H1 (cell line): ENCODE measurements at regions of chr14 and their contacts with region 1.

Region 1: GRCh38 chr14:99729991-99730868 is 46.1 kb downstream of the CYP46A1 start:
- DNase-seq: peak in 1 of 2 experiments; percentile 100
- H3K4me3 ChIP-seq: peak overlapping the region; percentile 33 to 70 (median 48)
- H3K27ac ChIP-seq: no peak overlapping the region
- H3K4me1 ChIP-seq: peaks cover 0 to 9% (median 7%) of the 10 kb centered on the region in 4 experiments; a peak in 5 of 7 replicates
- H3K27me3 ChIP-seq: 0 out of 7 replicates have a peak, but pooled peaks cover 0 to 3% (median 0%) of the 10 kb centered on the region in 4 experiments
- CTCF ChIP-seq: peak in 2 of 3 experiments; percentile 96; a peak in 3 of 4 replicates
- EP300 ChIP-seq: no peak; a peak in 1 of 3 replicates
- POLR2A ChIP-seq: no peak
- RAD21 ChIP-seq: peak; percentile 76 to 90

Region 2: DNA sequence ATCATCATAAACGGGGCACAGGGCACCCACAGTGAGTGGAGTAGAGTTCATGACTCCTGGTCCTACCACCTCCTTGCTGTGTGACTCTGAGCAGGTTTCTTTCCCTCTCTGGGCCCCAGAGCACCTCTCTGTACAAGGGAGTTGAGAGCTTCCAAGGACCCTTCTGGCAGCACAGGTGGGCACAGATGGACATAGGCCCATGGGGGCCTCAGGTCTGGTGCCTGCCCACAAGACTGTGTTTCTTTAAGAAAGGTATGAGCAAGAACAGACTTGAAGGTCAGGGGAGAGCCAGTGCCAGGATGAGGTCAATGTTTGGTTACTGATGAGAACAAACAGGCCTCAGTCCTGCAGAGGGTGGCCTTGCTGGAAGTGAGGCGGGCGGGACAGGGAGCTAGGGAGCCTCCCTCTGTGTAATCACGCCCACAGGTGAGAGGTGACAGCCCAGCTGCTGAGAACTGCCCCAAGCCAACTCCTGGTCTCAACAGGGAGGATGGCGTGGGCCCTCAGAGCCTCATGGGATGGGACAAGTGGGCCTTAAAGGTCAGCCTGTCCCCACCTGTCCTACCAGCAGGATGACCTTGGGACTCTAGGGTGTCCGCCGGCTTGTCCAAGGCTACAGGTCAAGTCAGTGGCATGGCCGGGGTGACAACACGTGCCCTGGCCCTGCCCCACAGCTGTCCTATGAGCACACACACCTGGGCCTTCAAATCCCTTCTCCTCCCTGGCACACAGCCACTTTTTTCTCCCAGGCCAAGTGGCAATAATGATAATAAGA is 175.3 kb before region 1 on chr14:
- CTCF ChIA-PET with region 1: no interaction called
- POLR2A ChIA-PET with region 1: no interaction called
- DNase-seq: no peak
- H3K4me3 ChIP-seq: no peak overlapping the region
- H3K27ac ChIP-seq: no peak overlapping the region
- H3K4me1 ChIP-seq: peaks cover 0 to 5% (median under 1%) of the 10 kb centered on the region in 4 experiments; a peak in 2 of 7 replicates
- H3K27me3 ChIP-seq: no peaks in the 10 kb centered on the region
- CTCF ChIP-seq: no peak
- EP300 ChIP-seq: no peak
- POLR2A ChIP-seq: no peak
- RAD21 ChIP-seq: no peak

Region 3: DNA sequence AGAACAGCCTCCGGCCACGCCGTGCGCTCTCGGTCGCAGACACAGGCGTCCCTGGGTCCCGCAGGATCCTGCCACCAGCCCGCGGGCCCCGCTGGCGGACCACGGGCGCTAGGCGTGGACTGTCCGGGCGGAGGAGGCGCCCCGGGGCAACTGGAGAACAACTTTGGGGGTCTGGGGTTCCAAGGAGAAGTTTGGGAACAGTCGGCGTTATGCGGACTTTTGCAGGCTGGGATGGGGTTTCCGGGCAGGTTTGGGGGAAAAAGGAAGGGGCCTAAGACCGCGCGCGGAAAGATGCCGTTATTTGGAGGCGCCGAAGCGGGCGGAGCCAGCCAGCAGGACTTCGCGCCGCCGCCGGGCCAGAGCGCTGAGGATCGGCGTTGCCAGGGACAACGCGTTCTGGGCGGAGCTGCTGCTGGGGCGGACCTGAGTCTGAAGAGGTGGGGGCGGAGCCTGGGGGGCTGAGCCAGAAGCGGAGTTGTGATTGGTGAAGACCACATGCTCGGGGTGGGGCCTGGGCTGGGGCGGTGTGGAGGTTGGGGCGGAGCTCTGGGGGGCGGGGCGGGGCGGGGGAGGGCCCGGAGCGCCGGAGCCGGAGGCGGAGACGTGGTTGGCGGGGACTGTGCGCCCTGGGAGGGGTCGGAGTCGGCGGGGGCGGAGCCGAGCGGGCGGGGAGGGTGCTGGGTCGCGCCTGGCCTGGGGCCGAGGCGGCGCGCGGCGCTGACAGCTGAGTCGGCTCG is 46.4 kb before region 1 on chr14 and contains the start of gene CYP46A1:
- CTCF ChIA-PET with region 1: interaction called, 16 read pairs
- POLR2A ChIA-PET with region 1: no interaction called
- DNase-seq: peak; percentile 99
- H3K4me3 ChIP-seq: peak within 1 kb of the TSS; percentile 59 to 100 (median 94)
- H3K27ac ChIP-seq: 0 out of 2 replicates have a peak within 1 kb of the TSS, but pooled peaks have one; percentile 37
- H3K4me1 ChIP-seq: peaks cover 0 to 10% (median 9%) of the 10 kb centered on the region in 4 experiments; a peak in 6 of 7 replicates
- H3K27me3 ChIP-seq: no peaks in the 10 kb centered on the region
- CTCF ChIP-seq: no peak
- EP300 ChIP-seq: no peak
- POLR2A ChIP-seq: no peak; a peak in 1 of 3 replicates
- RAD21 ChIP-seq: no peak
- total RNA-seq, gene CYP46A1: 0.71 and 1.3 TPM in 2 replicates

Region 4: GRCh38 chr14:99718031-99718810 is 12.0 kb before region 1 on chr14:
- CTCF ChIA-PET with region 1: interaction called, 14 read pairs
- POLR2A ChIA-PET with region 1: no interaction called
- DNase-seq: no peak
- H3K4me3 ChIP-seq: no peak overlapping the region
- H3K27ac ChIP-seq: no peak overlapping the region
- H3K4me1 ChIP-seq: peaks cover 0 to 2% (median 0%) of the 10 kb centered on the region in 4 experiments; a peak in 3 of 7 replicates
- H3K27me3 ChIP-seq: no peaks in the 10 kb centered on the region
- CTCF ChIP-seq: no peak
- EP300 ChIP-seq: no peak
- POLR2A ChIP-seq: no peak
- RAD21 ChIP-seq: no peak

Region 5: DNA sequence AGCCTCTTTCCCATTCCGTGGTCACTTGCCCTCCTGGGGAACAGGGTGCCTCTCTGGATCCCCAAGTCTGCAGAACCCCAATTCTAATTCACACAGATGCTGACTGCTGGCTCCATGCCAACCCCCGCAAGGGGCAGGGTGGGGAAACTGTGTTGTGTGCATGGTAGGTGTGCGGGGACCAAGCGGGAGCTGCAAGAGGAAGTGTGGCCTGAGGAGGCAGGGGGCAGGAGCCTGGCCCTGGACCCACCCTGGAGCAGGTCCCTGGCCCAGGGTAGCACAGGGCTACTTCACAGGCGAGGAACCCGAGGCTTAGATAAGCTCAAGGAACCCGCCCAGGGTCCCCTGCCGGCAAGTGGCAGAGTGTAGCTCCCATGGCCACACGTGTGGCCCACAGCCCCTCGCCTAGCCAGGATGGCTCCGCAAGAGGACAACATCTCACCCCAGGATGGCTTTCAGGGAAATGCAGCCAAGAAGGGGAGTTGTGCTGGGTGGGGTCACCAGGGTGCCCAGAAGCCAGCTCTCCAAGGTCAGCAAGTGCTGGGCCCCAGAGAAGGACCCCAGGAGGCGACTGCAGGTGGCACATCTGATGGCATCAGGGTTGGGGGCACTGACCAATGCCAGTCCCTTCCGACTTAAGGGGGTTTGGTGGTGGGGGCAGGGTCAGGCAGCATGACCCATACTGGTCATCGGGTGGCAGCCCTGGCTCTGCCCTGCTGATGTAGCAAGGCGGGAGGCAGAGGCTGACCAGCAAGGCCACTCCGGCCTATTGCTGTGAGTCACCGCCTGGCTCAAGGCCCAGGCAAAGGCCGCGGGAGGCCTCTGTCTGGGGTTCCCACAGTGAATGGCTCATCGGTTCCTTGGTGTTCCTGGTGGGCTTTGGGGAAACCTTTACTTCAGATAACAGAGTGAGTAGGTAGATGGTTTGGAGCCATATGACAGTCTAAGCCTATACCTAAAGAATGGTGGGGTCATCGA is 25.7 kb after region 1 on chr14:
- CTCF ChIA-PET with region 1: interaction called, 237 read pairs
- POLR2A ChIA-PET with region 1: no interaction called
- DNase-seq: no peak
- H3K4me3 ChIP-seq: no peak overlapping the region
- H3K27ac ChIP-seq: no peak overlapping the region
- H3K4me1 ChIP-seq: peaks cover 0 to 17% (median 9%) of the 10 kb centered on the region in 4 experiments; a peak in 6 of 7 replicates
- H3K27me3 ChIP-seq: no peaks in the 10 kb centered on the region
- CTCF ChIP-seq: no peak
- EP300 ChIP-seq: no peak
- POLR2A ChIP-seq: no peak
- RAD21 ChIP-seq: no peak

Region 6: DNA sequence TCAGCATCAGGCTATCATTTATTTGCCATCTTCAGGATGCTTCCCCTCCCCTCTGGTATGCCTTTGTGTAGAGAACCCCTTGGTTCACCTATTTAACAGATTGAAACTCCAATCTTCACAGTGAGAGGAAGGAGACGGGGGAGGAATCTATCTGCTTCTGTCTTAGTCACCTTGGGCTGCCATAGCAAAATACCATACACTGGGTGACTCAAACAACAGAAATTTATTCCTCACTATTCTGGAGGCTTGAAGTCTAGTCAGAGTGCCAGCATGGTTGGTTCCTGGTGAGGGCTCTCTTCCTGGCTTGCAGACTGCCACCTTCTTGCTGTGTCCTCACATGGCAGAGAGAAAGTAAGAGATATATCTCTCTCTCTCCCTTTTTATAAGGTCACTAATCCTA is 49.5 kb after region 1 on chr14:
- CTCF ChIA-PET with region 1: interaction called, 10 read pairs
- POLR2A ChIA-PET with region 1: no interaction called
- DNase-seq: no peak
- H3K4me3 ChIP-seq: no peak overlapping the region
- H3K27ac ChIP-seq: no peak overlapping the region; the same call in 1 of the 2 replicates
- H3K4me1 ChIP-seq: peaks cover under 1 to 20% (median 5%) of the 10 kb centered on the region in 4 experiments; a peak in 6 of 7 replicates
- H3K27me3 ChIP-seq: no peaks in the 10 kb centered on the region
- CTCF ChIP-seq: no peak
- EP300 ChIP-seq: no peak
- POLR2A ChIP-seq: no peak
- RAD21 ChIP-seq: no peak

Region 7: DNA sequence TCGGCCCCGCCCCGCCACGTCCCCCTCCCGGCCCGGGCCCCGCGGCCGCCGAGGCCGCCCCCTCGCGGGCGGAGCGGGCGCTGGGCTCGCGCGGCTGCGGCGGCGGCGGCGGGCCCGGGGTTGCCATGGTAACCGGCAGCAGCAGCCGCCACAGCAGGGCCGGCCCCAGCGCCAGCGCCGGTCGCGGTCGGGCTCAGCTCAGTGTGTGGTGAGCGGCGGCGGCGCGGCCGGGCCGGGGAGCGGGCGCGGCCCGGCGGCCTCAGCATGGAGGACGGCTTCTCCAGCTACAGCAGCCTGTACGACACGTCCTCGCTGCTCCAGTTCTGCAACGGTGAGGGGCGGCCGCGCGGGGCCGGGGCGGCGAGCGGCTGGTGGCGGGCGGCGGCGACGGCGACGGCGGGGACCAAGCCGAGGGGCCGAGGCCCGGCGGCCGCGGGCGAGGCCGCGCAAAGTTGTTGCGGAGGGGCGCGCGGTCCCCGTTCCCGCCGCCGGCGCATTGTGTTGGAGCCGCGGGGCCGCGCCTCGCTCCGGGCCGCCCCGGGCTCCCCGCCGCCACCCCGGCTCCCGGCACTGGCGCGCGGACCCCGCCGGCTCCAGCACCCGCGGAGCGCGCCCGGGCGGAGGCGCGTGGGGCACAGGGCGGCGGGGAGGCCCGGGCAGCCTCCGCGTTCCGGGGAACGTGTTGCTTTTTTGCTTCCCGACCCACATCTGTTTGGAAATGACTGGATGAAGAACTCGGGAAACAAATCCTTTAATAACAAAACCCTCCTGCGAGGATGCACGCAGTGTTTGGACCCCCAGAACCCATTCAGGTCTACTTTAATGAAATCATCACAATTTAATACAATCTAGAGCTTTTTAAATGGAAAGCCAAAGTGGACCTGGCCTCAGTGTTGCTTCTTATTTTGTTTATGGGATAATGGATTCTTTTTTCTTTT is 63.3 kb after region 1 on chr14 and contains the start of gene EML1:
- CTCF ChIA-PET with region 1: interaction called, 11 read pairs
- POLR2A ChIA-PET with region 1: interaction called, 8 read pairs
- DNase-seq: peak; percentile 41 to 86
- H3K4me3 ChIP-seq: peak within 1 kb of the TSS; percentile 65 to 87 (median 72)
- H3K27ac ChIP-seq: no peak within 1 kb of the TSS
- H3K4me1 ChIP-seq: peaks cover 0 to 8% (median 2%) of the 10 kb centered on the region in 4 experiments; a peak in 4 of 7 replicates
- H3K27me3 ChIP-seq: peaks cover 0 to 8% (median 0%) of the 10 kb centered on the region in 4 experiments; a peak in 3 of 7 replicates
- CTCF ChIP-seq: peak in 2 of 3 experiments; percentile 0 to 45; a peak in 2 of 4 replicates
- EP300 ChIP-seq: no peak
- POLR2A ChIP-seq: peak in 1 of 2 experiments; percentile 44; a peak in 1 of 3 replicates
- RAD21 ChIP-seq: peak in 1 of 2 experiments; percentile 11; a peak in 1 of 4 replicates
- total RNA-seq, gene EML1: 24.7 and 32.9 TPM in 2 replicates

Region 8: DNA sequence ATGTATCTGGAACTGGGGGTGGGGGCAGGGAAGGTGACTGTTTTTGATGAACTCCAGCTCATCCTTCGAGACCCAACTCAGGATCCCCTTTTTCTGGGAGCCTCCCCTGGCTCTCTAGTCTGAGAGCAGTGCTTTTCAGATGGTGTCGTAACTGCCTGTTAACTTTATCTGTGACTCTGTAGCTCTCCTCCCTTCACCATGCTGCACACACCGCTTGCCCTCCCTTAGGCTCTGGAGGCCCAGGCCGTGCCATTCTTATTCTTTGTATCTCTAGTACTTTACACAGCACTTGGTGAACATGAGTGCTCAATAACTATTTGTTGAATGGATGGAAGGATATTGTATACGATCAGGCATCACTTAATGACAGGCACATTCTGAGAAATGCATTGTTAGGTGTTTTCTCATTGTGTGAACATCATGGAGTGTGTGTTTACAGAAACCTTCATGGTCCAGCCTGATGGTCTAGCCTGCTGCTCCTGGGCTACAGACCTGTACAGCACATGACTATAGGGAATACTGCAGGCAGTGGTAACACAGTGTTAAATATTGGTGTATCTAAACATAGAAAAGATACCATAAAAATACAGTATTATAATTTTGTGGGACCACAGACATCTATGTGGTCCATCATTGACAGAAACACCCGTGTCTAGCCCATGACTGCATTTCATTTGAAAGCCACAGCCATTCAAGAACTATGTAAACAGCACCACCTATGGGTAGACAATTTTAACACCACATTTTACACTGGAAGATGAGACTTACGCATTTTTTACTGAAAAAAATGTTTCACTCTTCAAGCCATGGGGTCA is 154.8 kb after region 1 on chr14:
- CTCF ChIA-PET with region 1: interaction called, 152 read pairs
- POLR2A ChIA-PET with region 1: interaction called, 3 read pairs
- DNase-seq: no peak
- H3K4me3 ChIP-seq: no peak overlapping the region
- H3K27ac ChIP-seq: no peak overlapping the region
- H3K4me1 ChIP-seq: peaks cover 8 to 31% (median 24%) of the 10 kb centered on the region in 4 experiments
- H3K27me3 ChIP-seq: no peaks in the 10 kb centered on the region; a peak in 1 of 7 replicates
- CTCF ChIP-seq: peak in 2 of 3 experiments; percentile 49 to 68; a peak in 2 of 4 replicates
- EP300 ChIP-seq: no peak
- POLR2A ChIP-seq: no peak
- RAD21 ChIP-seq: peak; percentile 87 to 88